ENCODE measurements at regions of chr5 and their contacts with region 1.

Region 1: DNA sequence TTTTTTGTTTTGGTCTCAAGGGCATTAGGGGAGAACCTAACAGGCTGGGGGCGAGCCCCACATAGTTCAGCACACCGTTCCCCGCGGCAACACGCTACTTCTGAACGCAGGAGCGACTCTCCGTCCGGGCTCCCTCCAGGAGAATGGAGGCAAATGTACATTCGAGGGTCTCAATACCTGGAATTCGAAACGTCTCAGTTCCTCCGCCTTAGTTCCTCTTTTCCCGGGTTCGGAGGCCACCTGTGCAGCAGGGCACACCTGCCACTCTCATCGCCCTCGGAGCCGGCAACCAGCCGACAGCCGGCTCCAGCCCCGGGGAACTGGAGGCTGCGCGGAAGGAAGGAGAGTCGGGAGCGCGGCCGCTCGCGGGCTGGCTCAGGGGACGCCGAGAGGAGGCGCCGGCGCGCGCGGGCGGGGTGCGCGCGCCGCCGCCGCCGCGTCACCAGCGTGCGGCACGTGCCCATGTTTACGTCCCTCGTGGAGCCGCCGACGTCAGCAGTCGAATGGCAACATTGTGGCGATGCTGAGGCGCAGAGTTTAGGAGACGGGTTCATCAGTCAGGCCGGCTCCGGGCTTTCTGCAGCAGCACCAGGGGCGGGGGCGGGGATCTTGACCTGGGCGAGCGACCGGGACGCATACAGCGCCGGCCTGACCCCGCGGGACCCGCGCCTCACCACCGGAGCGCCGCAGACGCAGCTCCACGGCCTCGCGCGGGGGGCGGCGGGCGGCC is at the start of gene JMY:
- DNase-seq: peak; percentile 72 to 94 (median 84)
- ATAC-seq: peak; percentile 86
- H3K4me3 ChIP-seq: peak within 1 kb of the TSS; percentile 65
- H3K4me3 Mint-ChIP-seq: peak within 1 kb of the TSS; percentile 97
- H3K27ac ChIP-seq: peak within 1 kb of the TSS; percentile 79 to 89
- H3K27ac Mint-ChIP-seq: peak within 1 kb of the TSS; percentile 96
- H3K4me1 ChIP-seq: peaks cover 26% of the 10 kb centered on the region
- H3K4me1 Mint-ChIP-seq: peaks cover 30% of the 10 kb centered on the region
- H3K27me3 ChIP-seq: no peaks in the 10 kb centered on the region
- H3K27me3 Mint-ChIP-seq: no peaks in the 10 kb centered on the region
- CTCF ChIP-seq: no peak
- total RNA-seq, gene JMY: 73.3 to 73.5 TPM

Region 2: DNA sequence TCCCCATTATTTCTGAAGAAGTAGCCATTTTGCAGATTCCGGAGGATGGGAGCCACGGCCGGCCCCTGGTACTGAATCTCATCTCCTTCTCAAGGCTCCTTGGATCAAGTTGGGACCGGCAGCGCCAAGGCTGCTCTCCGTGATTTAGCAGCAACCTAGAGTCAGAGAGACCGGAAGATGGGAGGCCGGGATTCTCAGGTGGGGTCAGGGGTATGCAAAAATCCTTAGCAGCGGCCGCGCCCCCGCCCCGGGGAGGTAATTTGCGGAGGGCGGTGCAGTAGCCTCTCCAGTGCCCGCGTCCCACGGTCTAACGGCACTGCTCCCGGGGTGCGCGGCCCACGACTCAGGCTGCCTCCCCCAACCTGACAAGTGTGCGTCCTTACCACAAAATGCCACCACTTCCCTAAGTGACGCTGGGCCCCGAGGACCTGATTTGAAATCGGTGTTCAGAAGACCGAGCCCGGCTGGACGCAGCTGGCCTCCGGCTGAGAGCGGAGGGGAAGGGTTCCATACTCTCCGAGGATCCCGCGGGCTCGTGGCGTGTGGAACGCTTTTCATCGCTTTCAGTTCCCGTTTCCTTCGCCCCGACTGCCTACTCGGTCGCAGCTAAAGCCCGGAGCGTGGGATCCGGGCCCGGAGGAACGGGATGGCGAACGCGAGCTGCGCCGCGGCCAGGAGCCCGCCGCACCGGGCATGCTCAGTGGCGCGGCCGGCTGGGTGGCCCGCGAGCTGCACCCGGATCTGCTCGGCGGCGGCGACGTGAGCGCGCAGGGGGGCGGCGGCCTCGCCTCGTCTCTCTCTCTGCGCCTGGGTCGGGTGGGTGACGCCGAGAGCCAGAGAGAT is 875.7 kb before region 1 on chr5 and contains the start of gene SCAMP1:
- CTCF ChIA-PET with region 1: no interaction called
- POLR2A ChIA-PET with region 1: interaction called, 4 read pairs
- intact Hi-C with region 1: loop called in 1 of 2 experiments (anchors 10 kb)
- DNase-seq: peak; percentile 80 to 96 (median 90)
- ATAC-seq: peak; percentile 79
- H3K4me3 ChIP-seq: peak within 1 kb of the TSS; percentile 96
- H3K4me3 Mint-ChIP-seq: peak within 1 kb of the TSS; percentile 91
- H3K27ac ChIP-seq: peak within 1 kb of the TSS; percentile 86 to 87
- H3K27ac Mint-ChIP-seq: peak within 1 kb of the TSS; percentile 83
- H3K4me1 ChIP-seq: peaks cover 23% of the 10 kb centered on the region
- H3K4me1 Mint-ChIP-seq: peaks cover 53% of the 10 kb centered on the region
- H3K27me3 ChIP-seq: no peaks in the 10 kb centered on the region
- H3K27me3 Mint-ChIP-seq: no peaks in the 10 kb centered on the region
- CTCF ChIP-seq: peak; percentile 27
- total RNA-seq, gene SCAMP1: 16.0 to 18.4 TPM

Region 3: GRCh38 chr5:79030663-79031484 is 204.9 kb before region 1 on chr5:
- CTCF ChIA-PET with region 1: no interaction called
- POLR2A ChIA-PET with region 1: no interaction called
- intact Hi-C with region 1: no loop called
- DNase-seq: no peak
- ATAC-seq: no peak
- H3K4me3 ChIP-seq: no peak overlapping the region
- H3K4me3 Mint-ChIP-seq: no peak overlapping the region
- H3K27ac ChIP-seq: no peak overlapping the region
- H3K27ac Mint-ChIP-seq: no peak overlapping the region
- H3K4me1 ChIP-seq: no peaks in the 10 kb centered on the region
- H3K4me1 Mint-ChIP-seq: no peaks in the 10 kb centered on the region
- H3K27me3 ChIP-seq: peaks cover 0 to 9% of the 10 kb centered on the region in 2 experiments
- H3K27me3 Mint-ChIP-seq: peaks cover 20% of the 10 kb centered on the region
- CTCF ChIP-seq: no peak

Region 4: DNA sequence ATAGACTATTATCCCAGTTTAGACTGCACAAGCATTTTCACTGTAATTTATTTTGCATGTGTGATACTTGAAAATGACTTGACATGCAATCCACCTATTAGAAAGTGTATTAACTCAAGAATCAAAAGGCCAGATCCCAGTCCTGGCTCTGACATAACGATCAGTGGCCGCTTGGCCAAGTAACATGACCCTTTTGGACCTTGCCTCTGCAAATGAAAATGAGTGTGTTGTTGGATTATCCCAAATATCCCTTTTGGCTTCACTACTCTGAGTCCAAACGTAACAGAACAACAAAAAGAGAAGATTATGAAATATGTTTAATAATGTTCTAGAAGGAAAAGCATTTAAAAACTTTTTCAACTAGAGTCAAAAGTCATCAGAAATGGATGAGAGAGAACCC is 185.3 kb before region 1 on chr5:
- CTCF ChIA-PET with region 1: no interaction called
- POLR2A ChIA-PET with region 1: no interaction called
- intact Hi-C with region 1: no loop called
- DNase-seq: no peak
- ATAC-seq: no peak
- H3K4me3 ChIP-seq: no peak overlapping the region
- H3K4me3 Mint-ChIP-seq: no peak overlapping the region
- H3K27ac ChIP-seq: no peak overlapping the region
- H3K27ac Mint-ChIP-seq: no peak overlapping the region
- H3K4me1 ChIP-seq: no peaks in the 10 kb centered on the region
- H3K4me1 Mint-ChIP-seq: no peaks in the 10 kb centered on the region
- H3K27me3 ChIP-seq: no peaks in the 10 kb centered on the region
- H3K27me3 Mint-ChIP-seq: peaks cover 8% of the 10 kb centered on the region
- CTCF ChIP-seq: no peak

Region 5: DNA sequence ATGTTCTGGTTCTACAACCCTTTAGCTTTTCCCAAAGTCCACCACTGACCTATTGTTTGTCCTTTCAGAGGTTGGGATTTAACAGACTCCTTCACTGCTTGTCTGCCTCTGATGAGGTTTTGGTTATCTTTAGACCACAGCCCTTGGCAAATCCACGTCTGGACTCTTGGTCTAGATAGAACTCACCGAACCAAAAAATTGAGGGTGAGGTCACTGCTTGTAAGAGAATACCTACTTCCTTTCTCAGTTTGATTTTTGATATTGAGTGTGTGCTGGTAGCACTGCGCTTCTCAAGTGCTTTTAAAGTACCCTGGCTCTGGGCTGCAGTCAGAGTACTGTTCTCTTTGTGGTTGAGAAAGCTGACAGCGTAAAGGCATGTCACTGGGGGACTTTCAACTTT is 61.9 kb after region 1 on chr5:
- CTCF ChIA-PET with region 1: no interaction called
- POLR2A ChIA-PET with region 1: interaction called, 3 read pairs
- intact Hi-C with region 1: loop called in 1 of 2 experiments (anchors 5 kb)
- DNase-seq: no peak
- ATAC-seq: no peak
- H3K4me3 ChIP-seq: no peak overlapping the region
- H3K4me3 Mint-ChIP-seq: no peak overlapping the region
- H3K27ac ChIP-seq: no peak overlapping the region
- H3K27ac Mint-ChIP-seq: peak overlapping the region; percentile 4
- H3K4me1 ChIP-seq: no peaks in the 10 kb centered on the region
- H3K4me1 Mint-ChIP-seq: no peaks in the 10 kb centered on the region
- H3K27me3 ChIP-seq: no peaks in the 10 kb centered on the region
- H3K27me3 Mint-ChIP-seq: no peaks in the 10 kb centered on the region
- CTCF ChIP-seq: no peak

Region 6: DNA sequence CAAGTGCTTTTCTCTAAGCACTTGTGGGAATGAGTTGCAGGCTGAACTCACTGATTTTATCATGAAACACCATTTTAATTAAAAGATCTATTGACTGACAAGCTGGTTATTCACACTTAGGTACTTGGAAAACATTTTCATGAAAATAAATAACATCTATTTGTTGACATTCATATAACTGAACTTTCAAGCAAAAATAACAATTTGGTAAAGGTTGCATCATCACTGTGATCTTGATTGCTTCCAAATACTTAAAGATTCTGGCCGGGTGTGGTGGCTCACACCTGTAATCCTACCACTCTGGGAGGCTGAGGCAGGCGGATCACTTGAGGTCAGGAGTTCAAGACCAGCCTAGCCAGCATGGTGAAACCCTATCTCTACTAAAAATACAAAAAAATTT is 369.8 kb after region 1 on chr5:
- CTCF ChIA-PET with region 1: no interaction called
- POLR2A ChIA-PET with region 1: no interaction called
- intact Hi-C with region 1: loop called in 1 of 2 experiments (anchors 5 kb)
- DNase-seq: no peak
- ATAC-seq: no peak
- H3K4me3 ChIP-seq: no peak overlapping the region
- H3K4me3 Mint-ChIP-seq: no peak overlapping the region
- H3K27ac ChIP-seq: no peak overlapping the region
- H3K27ac Mint-ChIP-seq: no peak overlapping the region
- H3K4me1 ChIP-seq: no peaks in the 10 kb centered on the region
- H3K4me1 Mint-ChIP-seq: no peaks in the 10 kb centered on the region
- H3K27me3 ChIP-seq: no peaks in the 10 kb centered on the region
- H3K27me3 Mint-ChIP-seq: peaks cover 14% of the 10 kb centered on the region
- CTCF ChIP-seq: no peak

Region 7: DNA sequence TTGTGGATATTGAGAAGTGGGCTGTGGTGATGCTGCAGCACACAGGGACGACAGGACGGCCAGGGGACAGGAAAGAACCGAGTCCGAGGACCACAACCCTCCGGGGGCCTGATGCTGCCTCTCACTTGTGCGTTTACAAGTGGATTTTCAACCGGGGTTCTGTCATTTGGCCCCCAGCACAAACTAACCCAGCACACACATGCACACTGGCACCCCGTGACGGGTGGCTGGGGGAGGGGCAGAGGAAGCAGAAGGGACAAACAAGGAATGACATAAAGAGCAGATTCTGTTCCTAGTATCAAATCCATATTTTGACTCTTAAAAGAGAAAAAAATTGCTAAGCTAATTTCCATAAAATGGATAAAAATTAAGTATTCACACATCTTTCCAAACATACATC is 1153.8 kb after region 1 on chr5:
- CTCF ChIA-PET with region 1: no interaction called
- POLR2A ChIA-PET with region 1: no interaction called
- intact Hi-C with region 1: no loop called
- DNase-seq: no peak
- ATAC-seq: no peak
- H3K4me3 ChIP-seq: no peak overlapping the region
- H3K4me3 Mint-ChIP-seq: no peak overlapping the region
- H3K27ac ChIP-seq: no peak overlapping the region
- H3K27ac Mint-ChIP-seq: no peak overlapping the region
- H3K4me1 ChIP-seq: no peaks in the 10 kb centered on the region
- H3K4me1 Mint-ChIP-seq: peaks cover 8% of the 10 kb centered on the region
- H3K27me3 ChIP-seq: peaks cover 0 to 2% of the 10 kb centered on the region in 2 experiments
- H3K27me3 Mint-ChIP-seq: peaks cover 37% of the 10 kb centered on the region
- CTCF ChIP-seq: no peak

Region 8: GRCh38 chr5:80487829-80488721 is 1252.3 kb after region 1 on chr5 and contains the start of gene FAM151B:
- CTCF ChIA-PET with region 1: no interaction called
- POLR2A ChIA-PET with region 1: no interaction called
- intact Hi-C with region 1: loop called in 1 of 2 experiments (anchors 10 kb)
- DNase-seq: peak; percentile 45 to 91 (median 74)
- ATAC-seq: peak; percentile 88
- H3K4me3 ChIP-seq: peak within 1 kb of the TSS; percentile 58
- H3K4me3 Mint-ChIP-seq: peak within 1 kb of the TSS; percentile 88
- H3K27ac ChIP-seq: no peak within 1 kb of the TSS
- H3K27ac Mint-ChIP-seq: peak within 1 kb of the TSS; percentile 87
- H3K4me1 ChIP-seq: peaks cover 16% of the 10 kb centered on the region
- H3K4me1 Mint-ChIP-seq: peaks cover 21% of the 10 kb centered on the region
- H3K27me3 ChIP-seq: no peaks in the 10 kb centered on the region
- H3K27me3 Mint-ChIP-seq: no peaks in the 10 kb centered on the region
- CTCF ChIP-seq: no peak
- total RNA-seq, gene FAM151B: 0.33 to 0.61 TPM

Measured in CD4-positive, alpha-beta T cell (primary cell).